ENCODE measurements at regions of chr2 and their contacts with region 1.

Region 1: GRCh38 chr2:71226965-71227560 is at the start of gene PAIP2B:
- DNase-seq: peak; percentile 100
- ATAC-seq: peak; percentile 95
- H3K4me3 Mint-ChIP-seq: peak within 1 kb of the TSS; percentile 98
- H3K27ac Mint-ChIP-seq: peak within 1 kb of the TSS; percentile 88
- H3K4me1 Mint-ChIP-seq: peaks cover 16% of the 10 kb centered on the region
- H3K27me3 Mint-ChIP-seq: no peaks in the 10 kb centered on the region
- CTCF ChIP-seq: no peak
- total RNA-seq, gene PAIP2B: 3.1 to 3.4 TPM

Region 2: DNA sequence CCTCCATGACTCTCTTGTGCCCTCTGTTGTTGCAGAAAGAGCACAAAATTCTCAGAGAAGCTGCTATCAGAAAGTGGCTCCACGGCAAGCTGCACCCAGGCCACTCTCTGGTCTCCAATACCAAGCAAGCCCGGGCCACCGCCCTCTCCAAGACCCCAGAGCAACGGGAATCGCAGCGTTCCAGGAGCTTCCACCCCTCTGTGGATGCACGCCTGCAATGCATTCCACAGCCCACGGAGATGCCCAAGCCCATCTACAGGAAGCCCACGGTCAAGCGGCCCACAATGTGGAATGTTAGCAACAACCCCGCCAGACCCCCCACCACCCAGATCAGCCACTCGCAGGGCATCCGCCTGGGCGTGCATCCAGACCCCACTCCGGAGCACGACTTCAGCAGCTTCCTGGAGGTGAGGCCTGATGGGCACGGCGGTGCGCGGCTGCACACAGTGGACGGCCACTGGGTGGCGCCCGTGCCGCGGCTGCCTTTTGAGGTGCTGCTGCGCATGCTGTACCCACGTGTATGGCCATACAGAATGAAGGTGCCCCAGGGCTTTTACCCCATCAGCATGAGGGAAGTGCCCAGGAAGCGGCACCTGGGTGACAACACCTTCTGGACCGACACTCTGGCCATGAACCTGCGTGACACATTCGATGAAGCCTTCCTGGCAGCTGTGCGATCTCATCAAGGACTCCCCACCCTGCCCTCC is 242.3 kb before region 1 on chr2:
- CTCF ChIA-PET with region 1: no interaction called
- POLR2A ChIA-PET with region 1: no interaction called
- intact Hi-C with region 1: no loop called
- DNase-seq: peak; percentile 88
- ATAC-seq: peak; percentile 100
- H3K4me3 Mint-ChIP-seq: no peak overlapping the region
- H3K27ac Mint-ChIP-seq: no peak overlapping the region
- H3K4me1 Mint-ChIP-seq: peaks cover 10% of the 10 kb centered on the region
- H3K27me3 Mint-ChIP-seq: no peaks in the 10 kb centered on the region
- CTCF ChIP-seq: peak; percentile 92

Region 3: DNA sequence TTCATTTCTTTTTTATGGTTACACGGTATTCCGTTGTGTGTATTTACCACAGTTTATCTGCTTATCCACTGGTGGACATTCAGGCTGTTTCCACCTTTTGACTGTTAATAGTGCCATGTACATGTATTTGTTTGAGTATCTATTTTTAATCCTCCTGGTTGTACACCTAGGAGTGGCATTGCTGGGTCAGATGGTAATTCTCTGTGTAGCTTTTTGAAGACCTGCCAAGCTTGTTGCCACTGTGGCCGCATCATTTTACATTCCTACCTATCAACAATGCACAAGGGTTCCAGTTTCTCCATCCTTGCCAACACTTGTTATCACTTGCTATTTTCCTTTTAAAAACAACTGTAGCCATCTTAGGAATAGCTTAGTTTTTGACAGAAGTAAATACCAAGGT is 83.3 kb before region 1 on chr2:
- CTCF ChIA-PET with region 1: no interaction called
- POLR2A ChIA-PET with region 1: no interaction called
- intact Hi-C with region 1: no loop called
- DNase-seq: no peak
- ATAC-seq: no peak
- H3K4me3 Mint-ChIP-seq: no peak overlapping the region
- H3K27ac Mint-ChIP-seq: peak overlapping the region; percentile 0
- H3K4me1 Mint-ChIP-seq: no peaks in the 10 kb centered on the region
- H3K27me3 Mint-ChIP-seq: no peaks in the 10 kb centered on the region
- CTCF ChIP-seq: no peak

Region 4: DNA sequence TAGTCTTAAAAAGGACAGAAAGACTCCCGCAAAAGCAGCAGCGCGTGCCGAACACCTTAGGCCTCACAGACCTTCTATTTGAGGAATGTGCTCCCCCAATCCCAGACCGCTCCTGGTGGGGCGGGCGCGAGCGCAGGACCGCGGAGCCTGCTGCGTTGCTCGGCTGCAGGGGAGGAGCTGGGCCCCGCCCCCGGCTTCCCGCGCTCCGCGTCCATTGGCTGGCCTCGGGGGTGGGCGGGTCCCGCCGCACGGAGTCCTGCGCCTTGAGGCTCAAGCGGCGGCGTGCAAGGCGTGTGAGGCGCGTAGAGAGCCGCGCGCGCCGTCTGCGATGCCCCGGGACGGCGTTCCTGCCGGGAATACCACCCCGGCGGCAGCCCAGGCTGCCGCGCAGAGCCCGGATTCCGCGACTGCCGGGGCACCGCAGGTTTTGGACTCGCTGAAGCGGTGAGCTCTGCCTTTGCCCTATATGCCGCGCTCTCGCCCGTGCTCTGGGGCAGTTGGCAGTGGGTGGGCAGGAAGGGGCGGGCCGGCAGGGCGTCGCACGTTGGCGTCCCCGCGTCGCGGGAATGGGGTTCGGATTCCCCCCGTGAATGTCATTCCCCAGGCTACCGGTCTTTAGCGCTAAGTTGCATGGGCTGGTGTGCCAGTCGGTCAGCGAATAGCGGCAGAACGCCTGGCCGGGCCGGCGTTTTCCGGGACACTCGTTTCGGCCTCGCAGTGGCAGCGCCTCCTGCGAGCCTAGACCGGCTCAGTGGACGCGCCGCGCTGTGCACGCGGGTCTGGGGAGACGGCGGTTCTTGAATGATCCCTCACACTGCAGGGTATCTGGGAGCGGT is 49.5 kb after region 1 on chr2:
- CTCF ChIA-PET with region 1: interaction called, 5 read pairs
- POLR2A ChIA-PET with region 1: interaction called, 3 read pairs
- intact Hi-C with region 1: loop called (anchors 5 kb)
- DNase-seq: peak; percentile 89
- ATAC-seq: peak; percentile 99
- H3K4me3 Mint-ChIP-seq: peak overlapping the region; percentile 75
- H3K27ac Mint-ChIP-seq: no peak overlapping the region
- H3K4me1 Mint-ChIP-seq: peaks cover 7% of the 10 kb centered on the region
- H3K27me3 Mint-ChIP-seq: peaks cover 73% of the 10 kb centered on the region
- CTCF ChIP-seq: no peak